Mammary epithelial cell (primary cell): ENCODE measurements at regions of chr6 and their contacts with region 1.

Region 1: GRCh38 chr6:36302227-36302976 is 32.5 kb downstream of the PNPLA1 start:
- DNase-seq: peak; percentile 78
- H3K4me3 ChIP-seq: no peak overlapping the region
- H3K27ac ChIP-seq: no peak overlapping the region
- H3K4me1 ChIP-seq: no peaks in the 10 kb centered on the region
- H3K27me3 ChIP-seq: no peaks in the 10 kb centered on the region
- CTCF ChIP-seq: peak; percentile 98 to 99

Region 2: GRCh38 chr6:36123257-36124139 is 178.9 kb before region 1 on chr6:
- CTCF ChIA-PET with region 1: no interaction called
- dilution Hi-C with region 1: no loop called
- in situ Hi-C with region 1: no loop called
- intact Hi-C with region 1: loop called (anchors 1 kb)
- DNase-seq: peak; percentile 64
- H3K4me3 ChIP-seq: no peak overlapping the region
- H3K27ac ChIP-seq: no peak overlapping the region
- H3K4me1 ChIP-seq: peaks cover 15% of the 10 kb centered on the region
- H3K27me3 ChIP-seq: no peaks in the 10 kb centered on the region
- CTCF ChIP-seq: peak; percentile 68 to 87

Region 3: GRCh38 chr6:36227379-36228228 is 74.8 kb before region 1 on chr6:
- CTCF ChIA-PET with region 1: no interaction called
- dilution Hi-C with region 1: no loop called
- in situ Hi-C with region 1: no loop called
- intact Hi-C with region 1: loop called (anchors 2 kb)
- DNase-seq: peak; percentile 69
- H3K4me3 ChIP-seq: no peak overlapping the region
- H3K27ac ChIP-seq: no peak overlapping the region
- H3K4me1 ChIP-seq: peaks cover 24% of the 10 kb centered on the region
- H3K27me3 ChIP-seq: no peaks in the 10 kb centered on the region
- CTCF ChIP-seq: no peak

Region 4: GRCh38 chr6:36245572-36246061 is 56.8 kb before region 1 on chr6:
- CTCF ChIA-PET with region 1: no interaction called
- dilution Hi-C with region 1: loop called (anchors 5 kb)
- in situ Hi-C with region 1: no loop called
- intact Hi-C with region 1: loop called (anchors 2 kb)
- DNase-seq: no peak
- H3K4me3 ChIP-seq: no peak overlapping the region
- H3K27ac ChIP-seq: no peak overlapping the region
- H3K4me1 ChIP-seq: peaks cover 21% of the 10 kb centered on the region
- H3K27me3 ChIP-seq: no peaks in the 10 kb centered on the region
- CTCF ChIP-seq: no peak

Region 5: GRCh38 chr6:36323067-36323466 is 20.7 kb after region 1 on chr6:
- CTCF ChIA-PET with region 1: interaction called, 17 read pairs
- dilution Hi-C with region 1: no loop called
- in situ Hi-C with region 1: no loop called
- intact Hi-C with region 1: no loop called
- DNase-seq: no peak
- H3K4me3 ChIP-seq: no peak overlapping the region
- H3K27ac ChIP-seq: no peak overlapping the region
- H3K4me1 ChIP-seq: no peaks in the 10 kb centered on the region
- H3K27me3 ChIP-seq: peaks cover 5% of the 10 kb centered on the region
- CTCF ChIP-seq: no peak

Region 6: DNA sequence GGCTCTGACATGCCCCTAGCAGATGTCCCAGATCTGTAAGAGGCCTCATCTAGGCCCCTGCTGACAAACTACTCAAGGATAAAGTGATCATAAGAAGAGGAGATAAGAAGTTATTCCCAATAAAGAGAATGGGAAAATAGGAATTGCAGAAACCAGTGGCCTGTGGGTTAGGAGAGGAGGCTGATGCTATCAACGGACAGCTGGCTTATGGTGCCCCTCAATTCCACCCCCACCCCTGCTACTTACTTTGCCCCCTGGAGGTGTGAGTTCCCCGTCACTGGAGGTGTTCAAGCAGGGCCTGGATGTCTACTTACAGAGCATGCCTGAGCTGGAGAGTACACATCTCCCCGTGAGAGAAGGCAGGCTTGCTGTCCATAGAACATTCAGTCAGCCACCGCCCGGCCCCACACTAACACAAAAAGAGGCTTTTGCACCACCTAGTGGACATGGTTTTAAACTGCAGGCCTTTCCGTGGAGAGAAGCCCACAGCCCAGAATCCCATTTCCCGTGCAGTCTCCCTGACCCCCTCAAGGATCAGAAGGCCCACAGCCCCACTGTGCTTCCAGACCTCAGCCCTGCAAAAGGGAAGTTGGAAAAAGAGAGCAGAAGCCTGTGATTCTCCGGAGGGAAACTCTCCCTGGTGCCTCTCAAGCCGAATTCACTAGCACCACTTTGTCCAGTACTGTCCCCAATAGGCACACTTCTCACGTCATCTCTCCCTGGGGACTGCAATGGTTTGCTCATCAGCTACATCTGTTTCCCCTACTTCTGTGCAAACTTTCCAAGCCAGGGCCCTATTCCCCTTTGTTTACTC is 58.0 kb after region 1 on chr6:
- CTCF ChIA-PET with region 1: interaction called, 9 read pairs
- dilution Hi-C with region 1: loop called (anchors 5 kb)
- in situ Hi-C with region 1: no loop called
- intact Hi-C with region 1: loop called (anchors 1 kb)
- DNase-seq: peak; percentile 47
- H3K4me3 ChIP-seq: no peak overlapping the region
- H3K27ac ChIP-seq: no peak overlapping the region
- H3K4me1 ChIP-seq: no peaks in the 10 kb centered on the region
- H3K27me3 ChIP-seq: no peaks in the 10 kb centered on the region
- CTCF ChIP-seq: peak; percentile 78 to 85

Region 7: DNA sequence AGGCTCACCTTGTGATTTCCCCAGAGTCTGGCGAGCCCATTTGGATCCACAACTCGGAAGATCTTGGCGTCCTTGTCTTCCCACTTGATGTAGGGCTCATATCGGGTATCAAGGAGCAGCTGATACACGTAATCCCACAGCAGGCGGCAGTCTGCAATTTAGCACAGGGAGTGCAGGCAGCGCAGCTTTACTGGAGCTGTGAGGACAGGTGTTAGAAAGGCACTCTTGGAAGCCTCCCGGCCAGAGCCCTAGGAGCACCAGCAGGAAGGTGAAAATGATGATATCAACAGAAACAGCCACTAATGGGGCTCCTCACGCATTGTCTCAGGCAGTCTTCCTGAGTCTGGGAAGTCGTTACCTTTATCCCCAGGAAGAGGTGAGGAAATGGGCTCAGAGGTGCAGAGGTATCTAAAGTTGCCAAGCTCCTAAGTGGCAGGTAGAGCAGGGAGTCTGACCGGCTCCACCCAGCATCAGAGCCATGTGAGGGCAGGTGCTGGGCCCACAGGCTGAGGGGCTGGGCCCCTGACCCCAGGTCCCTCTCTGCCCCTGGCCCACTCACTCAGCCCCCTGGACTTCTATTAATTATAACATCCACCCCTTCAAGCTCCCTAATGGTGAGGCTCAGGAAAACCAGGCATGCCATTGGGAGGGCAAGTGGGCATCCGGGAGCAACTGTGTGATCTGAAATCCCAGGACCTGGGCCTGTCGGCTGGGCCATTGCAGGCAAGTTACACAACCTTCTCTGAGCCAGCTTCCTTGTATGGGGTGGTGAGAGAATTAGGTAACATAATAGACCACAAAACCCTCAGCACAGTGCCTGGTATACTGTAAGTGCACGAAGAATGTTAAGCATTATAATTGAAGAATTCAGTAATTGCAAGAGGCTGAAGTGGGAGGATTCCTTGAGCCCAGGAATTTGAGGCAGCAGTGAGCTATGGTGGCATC is 66.8 kb after region 1 on chr6:
- CTCF ChIA-PET with region 1: no interaction called
- dilution Hi-C with region 1: loop called (anchors 5 kb)
- in situ Hi-C with region 1: no loop called
- intact Hi-C with region 1: no loop called
- DNase-seq: peak; percentile 82
- H3K4me3 ChIP-seq: no peak overlapping the region
- H3K27ac ChIP-seq: no peak overlapping the region
- H3K4me1 ChIP-seq: peaks cover 14% of the 10 kb centered on the region
- H3K27me3 ChIP-seq: no peaks in the 10 kb centered on the region
- CTCF ChIP-seq: no peak